Activated CD8-positive, alpha-beta T cell treated with anti-CD3 and anti-CD28 coated beads for 36 hours (primary cell): ENCODE measurements at regions of chr2 and their contacts with region 1.

Region 1: GRCh38 chr2:106582148-106583143 is 95.3 kb downstream of the CD8B2 start:
- DNase-seq: peak; percentile 71
- ATAC-seq: peak; percentile 94
- H3K4me3 Mint-ChIP-seq: peak overlapping the region; percentile 79
- H3K27ac Mint-ChIP-seq: no peak overlapping the region
- H3K4me1 Mint-ChIP-seq: peaks cover 9% of the 10 kb centered on the region
- H3K27me3 Mint-ChIP-seq: peaks cover 48% of the 10 kb centered on the region
- CTCF ChIP-seq: peak; percentile 92

Region 2: GRCh38 chr2:106338043-106338442 is 244.4 kb before region 1 on chr2:
- CTCF ChIA-PET with region 1: no interaction called
- POLR2A ChIA-PET with region 1: no interaction called
- intact Hi-C with region 1: no loop called
- DNase-seq: no peak
- ATAC-seq: no peak
- H3K4me3 Mint-ChIP-seq: no peak overlapping the region
- H3K27ac Mint-ChIP-seq: no peak overlapping the region
- H3K4me1 Mint-ChIP-seq: no peaks in the 10 kb centered on the region
- H3K27me3 Mint-ChIP-seq: no peaks in the 10 kb centered on the region
- CTCF ChIP-seq: no peak

Region 3: GRCh38 chr2:106566050-106566449 is 16.4 kb before region 1 on chr2:
- CTCF ChIA-PET with region 1: interaction called, 31 read pairs
- POLR2A ChIA-PET with region 1: no interaction called
- intact Hi-C with region 1: no loop called
- DNase-seq: peak; percentile 79
- ATAC-seq: peak; percentile 96
- H3K4me3 Mint-ChIP-seq: no peak overlapping the region
- H3K27ac Mint-ChIP-seq: peak overlapping the region; percentile 86
- H3K4me1 Mint-ChIP-seq: peaks cover 23% of the 10 kb centered on the region
- H3K27me3 Mint-ChIP-seq: peaks cover 4% of the 10 kb centered on the region
- CTCF ChIP-seq: no peak

Region 4: DNA sequence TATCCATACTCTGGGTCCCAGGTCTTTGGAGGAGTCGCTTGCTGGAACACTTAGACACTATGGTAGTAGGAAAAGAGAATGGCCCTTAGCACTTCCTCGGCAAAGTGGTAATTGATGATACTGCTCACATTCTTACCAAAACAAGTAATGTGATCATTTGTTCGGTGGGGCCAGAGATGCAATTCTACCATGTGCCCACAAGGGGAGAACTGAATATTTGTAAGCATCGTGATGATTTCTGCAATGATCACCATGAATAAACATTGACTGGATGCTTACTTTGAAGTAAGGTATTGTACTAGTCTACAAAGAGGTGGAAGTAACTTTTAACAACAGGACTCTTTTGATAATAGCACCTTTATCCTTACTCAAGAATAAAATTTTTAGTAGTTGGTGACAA is 14.4 kb after region 1 on chr2:
- CTCF ChIA-PET with region 1: interaction called, 14 read pairs
- POLR2A ChIA-PET with region 1: no interaction called
- intact Hi-C with region 1: no loop called
- DNase-seq: no peak
- ATAC-seq: no peak
- H3K4me3 Mint-ChIP-seq: no peak overlapping the region
- H3K27ac Mint-ChIP-seq: no peak overlapping the region
- H3K4me1 Mint-ChIP-seq: no peaks in the 10 kb centered on the region
- H3K27me3 Mint-ChIP-seq: peaks cover 11% of the 10 kb centered on the region
- CTCF ChIP-seq: peak; percentile 47